IMR-90 (cell line): ENCODE measurements at regions of chr21 and their contacts with region 1.

Region 1: DNA sequence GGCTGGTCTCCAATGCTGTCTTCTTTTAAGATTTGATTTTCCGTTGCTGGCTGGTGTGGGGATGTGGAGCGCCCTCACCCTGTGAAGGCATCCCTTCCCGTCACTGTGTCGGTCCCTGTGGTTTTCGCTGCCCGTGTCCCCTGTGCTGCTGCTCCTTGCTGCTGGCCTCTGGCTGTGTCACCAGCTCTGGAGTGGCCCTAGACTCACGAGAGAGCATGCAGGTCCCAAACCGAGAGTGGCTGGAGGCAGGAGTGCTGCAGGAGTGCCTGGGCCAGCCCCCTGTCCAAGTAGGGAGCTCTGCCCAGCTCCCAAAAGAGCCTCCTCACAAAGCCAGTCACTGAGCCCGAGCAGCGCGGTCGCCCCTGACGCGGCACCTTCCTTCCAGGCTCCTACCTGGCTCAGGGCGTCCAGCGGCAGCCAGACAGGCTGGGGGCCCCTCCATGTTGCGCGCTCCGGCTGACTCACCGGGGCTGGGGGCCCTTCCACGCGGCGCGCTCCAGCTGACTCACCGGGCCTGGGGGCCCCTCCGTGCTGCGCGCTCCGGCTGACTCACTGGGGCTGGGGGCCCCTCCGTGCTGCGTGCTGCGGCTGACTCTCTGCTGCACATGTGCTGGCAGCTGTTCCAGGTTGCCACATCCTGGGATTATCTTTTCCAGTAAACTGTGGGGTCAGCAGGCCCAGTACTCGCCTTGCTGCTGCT is 106.7 kb upstream of the COL6A1 start:
- DNase-seq: peak; percentile 98
- ATAC-seq: peak; percentile 93
- H3K4me3 ChIP-seq: peak overlapping the region; percentile 3; the same call in 1 of the 2 replicates
- H3K27ac ChIP-seq: peak overlapping the region; percentile 99
- H3K4me1 ChIP-seq: peaks cover 38% of the 10 kb centered on the region
- H3K27me3 ChIP-seq: no peaks in the 10 kb centered on the region
- CTCF ChIP-seq: no peak
- POLR2A ChIP-seq: peak; percentile 64; the same call in 1 of the 2 replicates
- RAD21 ChIP-seq: peak; percentile 6; the same call in 1 of the 2 replicates

Region 2: DNA sequence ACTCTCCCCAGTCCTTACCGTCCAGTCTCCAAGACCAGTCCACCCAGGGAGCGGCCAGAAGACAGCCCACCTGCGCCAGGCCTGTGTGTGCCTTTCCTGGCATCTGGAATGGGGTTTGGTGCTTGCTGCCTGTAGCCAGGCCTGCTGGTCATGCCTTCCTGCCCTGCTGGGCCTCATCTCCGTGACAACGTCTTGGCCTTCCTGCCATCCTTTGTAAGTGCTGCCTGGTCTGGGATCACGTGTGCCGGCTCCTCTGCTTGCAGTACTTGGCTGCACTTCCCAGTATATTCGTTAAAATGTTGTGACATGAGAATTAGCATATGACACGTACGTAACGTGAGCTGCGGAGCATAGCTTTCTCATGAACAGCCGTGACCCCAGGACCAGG is 38.6 kb before region 1 on chr21:
- CTCF ChIA-PET with region 1: no interaction called
- POLR2A ChIA-PET with region 1: no interaction called
- dilution Hi-C with region 1: no loop called
- in situ Hi-C with region 1: no loop called
- intact Hi-C with region 1: loop called (anchors 2 kb)
- DNase-seq: peak; percentile 61
- ATAC-seq: no peak
- H3K4me3 ChIP-seq: no peak overlapping the region
- H3K27ac ChIP-seq: no peak overlapping the region
- H3K4me1 ChIP-seq: peaks cover 16% of the 10 kb centered on the region
- H3K27me3 ChIP-seq: no peaks in the 10 kb centered on the region
- CTCF ChIP-seq: no peak
- POLR2A ChIP-seq: no peak
- RAD21 ChIP-seq: no peak

Region 3: GRCh38 chr21:45981151-45982089 is 106.6 kb after region 1 on chr21 and contains the start of gene COL6A1:
- CTCF ChIA-PET with region 1: no interaction called
- POLR2A ChIA-PET with region 1: no interaction called
- dilution Hi-C with region 1: no loop called
- in situ Hi-C with region 1: no loop called
- intact Hi-C with region 1: no loop called
- DNase-seq: peak; percentile 88
- ATAC-seq: peak; percentile 65
- H3K4me3 ChIP-seq: peak within 1 kb of the TSS; percentile 95
- H3K27ac ChIP-seq: peak within 1 kb of the TSS; percentile 99
- H3K4me1 ChIP-seq: peaks cover 29% of the 10 kb centered on the region
- H3K27me3 ChIP-seq: no peaks in the 10 kb centered on the region
- CTCF ChIP-seq: no peak
- POLR2A ChIP-seq: peak; percentile 95
- RAD21 ChIP-seq: 0 out of 2 replicates have a peak, but pooled peaks have one; percentile 23
- total RNA-seq, gene COL6A1: 173 and 186 TPM in 2 replicates

Region 4: DNA sequence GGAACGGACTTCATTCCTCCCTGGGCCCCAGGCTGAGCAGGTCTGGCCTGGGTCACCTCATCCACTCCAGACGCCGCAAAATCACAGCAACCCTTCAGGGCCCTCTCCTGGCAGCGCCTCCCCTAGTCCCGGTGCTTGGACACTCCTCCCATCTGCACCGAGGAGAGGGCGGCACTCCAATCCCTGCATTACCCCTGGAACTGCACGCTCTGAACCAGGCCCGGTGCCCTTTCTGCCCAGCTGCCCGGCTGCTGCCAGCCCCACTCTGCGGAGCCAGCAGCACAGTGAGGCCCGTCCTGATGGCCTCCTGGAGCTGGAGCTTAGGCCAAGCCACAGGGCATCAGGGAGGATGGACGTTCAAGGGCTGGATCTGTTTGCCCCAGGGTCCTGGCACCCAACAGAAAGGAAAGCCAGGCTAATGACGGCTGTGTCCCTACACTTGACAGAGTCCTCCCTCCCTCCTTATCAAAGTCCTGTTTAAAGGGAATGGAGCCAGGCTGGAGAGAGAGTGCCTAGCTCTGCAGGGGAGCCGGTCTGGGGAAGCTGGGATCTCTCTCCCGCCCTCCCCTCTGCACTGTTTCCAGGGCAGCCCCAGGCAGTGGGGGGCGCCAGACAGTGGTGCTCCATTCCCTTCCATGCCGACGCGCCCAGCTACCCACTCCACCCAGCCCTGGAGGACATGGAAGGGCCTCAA is 235.8 kb after region 1 on chr21:
- CTCF ChIA-PET with region 1: no interaction called
- POLR2A ChIA-PET with region 1: no interaction called
- dilution Hi-C with region 1: no loop called
- in situ Hi-C with region 1: no loop called
- intact Hi-C with region 1: no loop called
- DNase-seq: no peak
- ATAC-seq: peak; percentile 6; the same call in 1 of the 2 replicates
- H3K4me3 ChIP-seq: no peak overlapping the region
- H3K27ac ChIP-seq: peak overlapping the region; percentile 1; the same call in 1 of the 2 replicates
- H3K4me1 ChIP-seq: peaks cover 4% of the 10 kb centered on the region
- H3K27me3 ChIP-seq: no peaks in the 10 kb centered on the region
- CTCF ChIP-seq: no peak
- POLR2A ChIP-seq: no peak
- RAD21 ChIP-seq: no peak

Region 5: DNA sequence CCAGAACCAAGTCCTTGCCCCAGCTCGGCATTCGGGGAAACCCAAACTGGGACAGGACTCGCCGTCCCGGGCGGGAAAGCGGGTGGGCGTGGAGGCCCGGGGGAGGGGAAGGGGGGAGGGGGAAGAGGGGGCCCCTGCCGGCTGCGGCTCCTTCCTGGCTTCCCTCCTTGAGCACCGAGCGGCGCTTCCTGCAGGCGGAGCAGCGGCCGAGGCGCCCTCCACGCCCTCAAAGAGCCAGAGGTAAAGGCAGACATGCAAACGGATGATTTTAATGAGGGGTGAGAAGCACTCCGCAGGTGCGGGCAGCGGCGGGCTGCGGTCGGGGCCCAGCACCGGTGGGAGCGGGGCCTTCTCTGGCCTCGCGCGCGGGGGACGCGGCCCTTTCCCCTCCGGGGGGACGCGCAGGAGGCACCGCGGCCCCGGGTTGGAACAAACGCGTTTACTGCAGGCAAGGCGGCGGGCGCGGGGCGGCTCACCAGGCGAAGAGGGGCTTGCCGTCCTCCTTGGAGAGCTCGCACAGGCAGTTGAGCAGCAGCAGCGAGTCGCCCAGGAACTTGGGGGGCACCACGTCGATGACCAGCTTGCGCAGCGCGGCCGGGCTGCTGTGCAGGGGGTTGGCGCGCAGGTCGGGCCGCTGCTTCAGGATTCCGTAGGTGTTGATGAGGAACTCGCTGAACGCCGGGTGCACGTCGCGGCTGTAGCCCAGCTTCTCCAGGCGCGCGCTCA is 286.2 kb after region 1 on chr21:
- CTCF ChIA-PET with region 1: no interaction called
- POLR2A ChIA-PET with region 1: no interaction called
- dilution Hi-C with region 1: no loop called
- in situ Hi-C with region 1: no loop called
- intact Hi-C with region 1: no loop called
- DNase-seq: no peak
- ATAC-seq: no peak
- H3K4me3 ChIP-seq: no peak overlapping the region
- H3K27ac ChIP-seq: no peak overlapping the region
- H3K4me1 ChIP-seq: no peaks in the 10 kb centered on the region
- H3K27me3 ChIP-seq: no peaks in the 10 kb centered on the region
- CTCF ChIP-seq: no peak
- POLR2A ChIP-seq: no peak
- RAD21 ChIP-seq: no peak